ENCODE measurements at regions of chr1 and their contacts with region 1.

Region 1: GRCh38 chr1:86478416-86479156 is 9.9 kb downstream of the CLCA1 start:
- DNase-seq: no peak
- ATAC-seq: peak in 4 of 8 donors; percentile 45 to 65 (median 56)
- H3K4me3 ChIP-seq: no peak overlapping the region
- H3K27ac ChIP-seq: peak overlapping the region in 5 of 10 donors; percentile 20 to 67 (median 37)
- H3K4me1 ChIP-seq: peaks cover 0 to 4% (median 0%) of the 10 kb centered on the region in 9 donors
- H3K27me3 ChIP-seq: no peaks in the 10 kb centered on the region
- CTCF ChIP-seq: no peak

Region 2: GRCh38 chr1:86289161-86289560 is 189.4 kb before region 1 on chr1:
- intact Hi-C with region 1: no loop called
- DNase-seq: no peak
- ATAC-seq: no peak
- H3K4me3 ChIP-seq: no peak overlapping the region
- H3K27ac ChIP-seq: no peak overlapping the region
- H3K4me1 ChIP-seq: no peaks in the 10 kb centered on the region
- H3K27me3 ChIP-seq: no peaks in the 10 kb centered on the region
- CTCF ChIP-seq: no peak

Region 3: GRCh38 chr1:86441581-86441980 is 37.0 kb before region 1 on chr1:
- intact Hi-C with region 1: no loop called
- DNase-seq: no peak
- ATAC-seq: no peak
- H3K4me3 ChIP-seq: no peak overlapping the region
- H3K27ac ChIP-seq: no peak overlapping the region
- H3K4me1 ChIP-seq: no peaks in the 10 kb centered on the region
- H3K27me3 ChIP-seq: peaks cover 0 to 6% (median 0%) of the 10 kb centered on the region in 7 donors
- CTCF ChIP-seq: no peak

Region 4: DNA sequence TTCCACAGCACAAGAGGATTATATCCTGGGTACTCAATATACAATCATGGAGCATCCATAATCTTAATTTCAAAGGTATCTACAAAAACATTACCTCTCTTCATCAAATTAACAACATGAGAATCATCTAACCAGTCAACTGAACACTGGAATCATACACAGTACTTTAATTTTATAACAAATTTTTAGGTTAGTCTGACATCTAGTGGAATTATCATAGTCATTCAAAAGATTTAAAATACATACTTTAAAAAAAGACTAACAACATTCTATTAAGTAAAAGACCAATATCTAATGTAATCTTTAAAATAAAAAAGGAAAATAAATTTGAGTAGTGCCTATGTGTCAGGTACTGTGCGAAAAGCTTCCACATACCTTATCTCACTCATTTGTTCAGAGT is 209.0 kb after region 1 on chr1:
- intact Hi-C with region 1: loop called in 3 of 10 experiments (anchors 5 to 10 kb)
- DNase-seq: no peak
- ATAC-seq: no peak
- H3K4me3 ChIP-seq: no peak overlapping the region
- H3K27ac ChIP-seq: no peak overlapping the region
- H3K4me1 ChIP-seq: no peaks in the 10 kb centered on the region
- H3K27me3 ChIP-seq: no peaks in the 10 kb centered on the region
- CTCF ChIP-seq: peak in 5 of 9 donors; percentile 21 to 44 (median 39)

Measured in heart right ventricle (tissue), 16 donors.